Motor neuron (in vitro differentiated cells): ENCODE measurements at regions of chr2 and their contacts with region 1.

Region 1: GRCh38 chr2:148509288-148509902 is 135.2 kb upstream of the EPC2 start:
- ATAC-seq: peak; percentile 76 to 100 (median 99)
- H3K4me3 ChIP-seq: peak overlapping the region in 1 of 5 donors; percentile 13
- H3K27ac ChIP-seq: no peak overlapping the region
- H3K4me1 ChIP-seq: no peaks in the 10 kb centered on the region

Region 2: GRCh38 chr2:146523196-146523595 is 1986.2 kb before region 1 on chr2:
- in situ Hi-C with region 1: no loop called
- ATAC-seq: no peak
- H3K4me3 ChIP-seq: no peak overlapping the region
- H3K27ac ChIP-seq: no peak overlapping the region
- H3K4me1 ChIP-seq: no peaks in the 10 kb centered on the region

Region 3: GRCh38 chr2:147989809-147990403 is 519.5 kb before region 1 on chr2:
- in situ Hi-C with region 1: loop called in 3 of 9 experiments (anchors 25 kb)
- ATAC-seq: peak in 3 of 8 experiments; percentile 65 to 77 (median 75)
- H3K4me3 ChIP-seq: no peak overlapping the region
- H3K27ac ChIP-seq: no peak overlapping the region
- H3K4me1 ChIP-seq: no peaks in the 10 kb centered on the region

Region 4: DNA sequence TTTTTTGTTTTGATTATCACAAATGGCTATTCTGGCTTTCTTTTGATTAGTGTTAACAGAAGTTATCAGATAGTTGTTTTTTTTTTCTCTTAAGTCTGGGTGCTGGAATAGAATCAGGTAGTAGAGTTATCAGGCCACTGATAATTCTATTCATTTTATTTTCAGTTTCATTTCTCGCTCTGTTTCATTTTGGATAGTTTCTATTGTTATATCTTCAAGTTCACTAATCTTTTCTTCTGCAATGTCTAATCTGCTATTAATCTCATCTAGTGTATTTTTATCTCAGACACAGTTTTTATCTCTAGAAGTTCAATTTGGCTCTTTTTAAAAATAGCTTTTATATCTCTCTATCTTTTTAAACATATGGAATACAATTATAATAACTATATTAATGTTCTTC is 106.6 kb before region 1 on chr2:
- in situ Hi-C with region 1: no loop called
- ATAC-seq: no peak
- H3K4me3 ChIP-seq: no peak overlapping the region
- H3K27ac ChIP-seq: no peak overlapping the region
- H3K4me1 ChIP-seq: peaks cover 0 to 2% of the 10 kb centered on the region in 2 donors